ENCODE measurements at regions of chr16 and their contacts with region 1.

Region 1: GRCh38 chr16:49491771-49492761 is 118.5 kb downstream of the C16orf78 start:
- DNase-seq: peak in 8 of 10 donors; percentile 26 to 67 (median 57)
- H3K4me3 ChIP-seq: peak overlapping the region in 58 of 59 donors; percentile 9 to 64 (median 46)
- H3K27ac ChIP-seq: peak overlapping the region in 26 of 59 donors; percentile 0 to 72 (median 32)
- H3K27me3 ChIP-seq: peaks cover 0 to 3% (median 0%) of the 10 kb centered on the region in 45 donors
- CTCF ChIP-seq: peak; percentile 58 to 95 (median 86)

Region 2: DNA sequence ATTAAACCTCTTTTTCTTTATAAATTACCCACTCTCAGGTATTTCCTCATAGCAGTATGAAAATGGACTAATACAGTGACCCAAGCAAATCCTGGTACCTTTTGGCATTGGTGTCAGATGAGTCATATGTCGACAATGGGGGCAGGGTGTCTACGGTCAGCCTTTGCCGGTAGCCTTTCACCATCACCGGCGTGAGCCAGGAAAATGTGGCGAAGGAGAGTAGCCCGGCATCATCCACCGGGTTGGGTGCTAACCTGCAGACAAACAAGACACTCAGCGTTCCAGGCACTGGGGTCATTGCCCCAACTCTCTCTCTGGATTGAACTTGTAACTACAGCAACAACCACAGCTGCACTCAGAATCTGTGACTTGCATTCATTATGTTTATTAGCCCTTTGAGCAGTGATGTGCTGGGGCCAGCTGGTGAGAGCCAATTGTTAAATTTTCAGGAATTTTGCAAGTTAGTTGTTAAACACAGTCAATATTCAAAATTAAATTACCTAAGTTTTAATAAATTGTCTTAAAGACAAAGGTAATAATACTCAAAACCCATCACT is 1348.2 kb before region 1 on chr16:
- intact Hi-C with region 1: no loop called
- DNase-seq: no peak
- H3K4me3 ChIP-seq: no peak overlapping the region
- H3K27ac ChIP-seq: no peak overlapping the region
- H3K27me3 ChIP-seq: no peaks in the 10 kb centered on the region
- CTCF ChIP-seq: no peak

Region 3: GRCh38 chr16:49748322-49748721 is 256.3 kb after region 1 on chr16:
- intact Hi-C with region 1: loop called in 1 of 2 experiments (anchors 10 kb)
- DNase-seq: no peak
- H3K4me3 ChIP-seq: no peak overlapping the region
- H3K27ac ChIP-seq: no peak overlapping the region
- H3K27me3 ChIP-seq: peaks cover 0 to 15% (median 0%) of the 10 kb centered on the region in 45 donors
- CTCF ChIP-seq: no peak

Region 4: DNA sequence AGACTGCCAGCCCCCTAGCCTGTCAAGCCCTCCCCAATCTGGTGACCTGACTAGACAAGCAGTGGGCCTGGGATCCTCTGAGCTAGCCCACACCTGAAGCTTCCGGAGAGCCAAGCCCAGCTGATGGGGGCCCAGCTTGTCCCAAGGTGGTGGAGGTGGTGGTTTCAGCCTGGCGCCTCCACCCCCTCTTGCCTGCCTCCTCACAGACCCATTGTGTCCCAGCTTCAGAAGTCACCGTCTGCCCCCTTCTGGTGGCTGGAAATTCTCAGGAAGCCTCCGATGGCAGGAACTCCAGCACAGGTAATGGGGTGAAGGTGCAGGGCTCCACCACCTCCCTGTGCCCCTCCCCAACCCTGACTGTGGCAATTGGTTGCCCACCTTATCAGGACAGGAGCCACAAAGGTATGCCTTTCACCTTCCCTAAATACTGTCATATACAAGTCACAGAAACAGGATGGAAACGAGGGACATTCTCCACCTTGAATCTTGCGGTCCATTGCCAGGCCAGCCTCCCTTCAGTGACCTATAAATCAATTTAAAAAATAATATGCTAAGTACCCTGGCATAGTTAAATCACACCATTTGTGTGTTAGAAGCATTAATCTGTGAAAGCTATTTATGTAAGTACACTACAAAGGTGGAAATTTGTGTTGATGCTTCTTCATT is 429.9 kb after region 1 on chr16:
- intact Hi-C with region 1: loop called in 1 of 2 experiments (anchors 5 kb)
- DNase-seq: peak; percentile 25 to 73 (median 56)
- H3K4me3 ChIP-seq: no peak overlapping the region
- H3K27ac ChIP-seq: no peak overlapping the region
- H3K27me3 ChIP-seq: peaks cover 0 to 9% (median 0%) of the 10 kb centered on the region in 45 donors
- CTCF ChIP-seq: peak; percentile 21 to 78 (median 60)

Measured in dorsolateral prefrontal cortex (tissue), 120 donors.